ENCODE measurements at regions of chr12 and their contacts with region 1.

Region 1: GRCh38 chr12:102470945-102471344 is 9.4 kb downstream of the IGF1 start:
- DNase-seq: no peak
- ATAC-seq: no peak
- H3K4me3 ChIP-seq: no peak overlapping the region
- H3K4me3 Mint-ChIP-seq: no peak overlapping the region
- H3K27ac ChIP-seq: no peak overlapping the region
- H3K27ac Mint-ChIP-seq: no peak overlapping the region
- H3K4me1 ChIP-seq: no peaks in the 10 kb centered on the region
- H3K4me1 Mint-ChIP-seq: no peaks in the 10 kb centered on the region
- H3K27me3 ChIP-seq: peaks cover 0 to 4% (median 2%) of the 10 kb centered on the region in 4 experiments
- H3K27me3 Mint-ChIP-seq: peaks cover 31% of the 10 kb centered on the region
- CTCF ChIP-seq: no peak

Region 2: DNA sequence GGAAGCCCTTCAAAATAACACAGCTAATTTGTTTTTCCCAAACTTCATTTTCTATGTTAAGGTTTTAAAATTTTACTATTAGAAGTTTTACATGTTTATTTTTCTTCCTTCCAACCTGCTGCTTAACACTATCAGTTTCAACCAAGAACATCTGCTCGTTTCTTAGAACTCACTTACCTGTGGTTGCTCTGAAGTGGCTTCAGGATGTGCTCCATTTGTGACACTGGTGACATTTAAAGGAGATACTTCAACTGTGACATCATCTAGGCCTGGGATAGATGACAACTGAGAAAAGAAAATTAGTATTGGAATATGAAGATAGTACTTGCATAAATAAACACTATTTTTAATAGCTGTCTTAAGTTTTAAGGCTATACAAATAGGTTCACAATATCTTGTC is 427.0 kb before region 1 on chr12:
- CTCF ChIA-PET with region 1: no interaction called
- POLR2A ChIA-PET with region 1: no interaction called
- intact Hi-C with region 1: no loop called
- DNase-seq: no peak
- ATAC-seq: no peak
- H3K4me3 ChIP-seq: no peak overlapping the region
- H3K4me3 Mint-ChIP-seq: no peak overlapping the region
- H3K27ac ChIP-seq: no peak overlapping the region
- H3K27ac Mint-ChIP-seq: no peak overlapping the region
- H3K4me1 ChIP-seq: peaks cover 0 to 3% of the 10 kb centered on the region in 2 donors
- H3K4me1 Mint-ChIP-seq: peaks cover 3% of the 10 kb centered on the region
- H3K27me3 ChIP-seq: no peaks in the 10 kb centered on the region
- H3K27me3 Mint-ChIP-seq: no peaks in the 10 kb centered on the region
- CTCF ChIP-seq: no peak

Region 3: GRCh38 chr12:102107970-102108369 is 363.0 kb before region 1 on chr12:
- CTCF ChIA-PET with region 1: no interaction called
- POLR2A ChIA-PET with region 1: no interaction called
- intact Hi-C with region 1: no loop called
- DNase-seq: no peak
- ATAC-seq: no peak
- H3K4me3 ChIP-seq: no peak overlapping the region
- H3K4me3 Mint-ChIP-seq: no peak overlapping the region
- H3K27ac ChIP-seq: no peak overlapping the region
- H3K27ac Mint-ChIP-seq: peak overlapping the region; percentile 26
- H3K4me1 ChIP-seq: no peaks in the 10 kb centered on the region
- H3K4me1 Mint-ChIP-seq: no peaks in the 10 kb centered on the region
- H3K27me3 ChIP-seq: no peaks in the 10 kb centered on the region
- H3K27me3 Mint-ChIP-seq: no peaks in the 10 kb centered on the region
- CTCF ChIP-seq: no peak

Region 4: GRCh38 chr12:102343361-102344121 is 127.4 kb before region 1 on chr12:
- CTCF ChIA-PET with region 1: no interaction called
- POLR2A ChIA-PET with region 1: no interaction called
- intact Hi-C with region 1: no loop called
- DNase-seq: no peak
- ATAC-seq: no peak
- H3K4me3 ChIP-seq: no peak overlapping the region
- H3K4me3 Mint-ChIP-seq: no peak overlapping the region
- H3K27ac ChIP-seq: no peak overlapping the region
- H3K27ac Mint-ChIP-seq: no peak overlapping the region
- H3K4me1 ChIP-seq: no peaks in the 10 kb centered on the region
- H3K4me1 Mint-ChIP-seq: no peaks in the 10 kb centered on the region
- H3K27me3 ChIP-seq: no peaks in the 10 kb centered on the region
- H3K27me3 Mint-ChIP-seq: peaks cover 5% of the 10 kb centered on the region
- CTCF ChIP-seq: no peak

Region 5: DNA sequence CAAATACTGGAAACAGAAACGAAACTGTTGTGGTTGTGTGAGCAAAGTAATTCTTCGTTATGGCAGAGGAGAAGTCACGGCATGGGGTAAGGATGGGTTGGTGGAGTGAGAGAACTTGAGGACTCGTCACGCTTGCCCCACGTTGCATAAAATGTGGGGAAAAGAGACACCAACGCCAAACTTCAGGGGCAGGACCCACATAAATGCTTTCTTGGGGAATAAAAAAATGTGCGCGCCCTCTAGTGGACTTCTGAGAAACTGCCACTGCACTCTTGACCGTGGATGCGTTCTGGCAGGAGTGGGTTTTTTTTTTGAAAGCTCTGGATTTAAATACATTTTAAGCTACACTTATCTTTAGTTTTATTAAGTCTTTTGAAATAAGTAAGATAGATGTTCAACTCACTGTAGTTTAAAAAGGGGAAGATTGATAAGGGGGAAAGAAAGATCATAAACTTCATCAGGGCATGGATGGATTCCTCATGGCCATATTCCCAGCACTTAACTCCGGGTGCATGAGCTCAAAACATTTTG is 13.5 kb after region 1 on chr12:
- CTCF ChIA-PET with region 1: interaction called, 20 read pairs
- POLR2A ChIA-PET with region 1: no interaction called
- intact Hi-C with region 1: no loop called
- DNase-seq: peak; percentile 73
- ATAC-seq: peak; percentile 75
- H3K4me3 ChIP-seq: peak overlapping the region in 3 of 5 experiments; percentile 11 to 55 (median 44)
- H3K4me3 Mint-ChIP-seq: peak overlapping the region; percentile 80
- H3K27ac ChIP-seq: peak overlapping the region; percentile 19 to 44
- H3K27ac Mint-ChIP-seq: peak overlapping the region; percentile 64
- H3K4me1 ChIP-seq: peaks cover 23 to 27% of the 10 kb centered on the region in 2 donors
- H3K4me1 Mint-ChIP-seq: peaks cover 32% of the 10 kb centered on the region
- H3K27me3 ChIP-seq: no peaks in the 10 kb centered on the region
- H3K27me3 Mint-ChIP-seq: no peaks in the 10 kb centered on the region
- CTCF ChIP-seq: peak; percentile 98